PC-3 (cell line): ENCODE measurements at regions of chr10 and their contacts with region 1.

Region 1: GRCh38 chr10:31393844-31394243 is 74.8 kb downstream of the ZEB1 start:
- DNase-seq: no peak
- ATAC-seq: no peak; the same call in 1 of the 2 replicates
- H3K4me3 ChIP-seq: no peak overlapping the region
- H3K27ac ChIP-seq: peak overlapping the region; percentile 32; the same call in 1 of the 2 replicates
- H3K4me1 ChIP-seq: peaks cover 22% of the 10 kb centered on the region
- H3K27me3 ChIP-seq: no peaks in the 10 kb centered on the region
- CTCF ChIP-seq: no peak

Region 2: GRCh38 chr10:31353574-31353973 is 40.3 kb before region 1 on chr10:
- CTCF ChIA-PET with region 1: no interaction called
- POLR2A ChIA-PET with region 1: no interaction called
- intact Hi-C with region 1: loop called (anchors 5 kb)
- DNase-seq: peak; percentile 88
- ATAC-seq: peak; percentile 97
- H3K4me3 ChIP-seq: 0 out of 2 replicates have a peak overlapping the region, but pooled peaks have one; percentile 51
- H3K27ac ChIP-seq: peak overlapping the region; percentile 66
- H3K4me1 ChIP-seq: peaks cover 27% of the 10 kb centered on the region
- H3K27me3 ChIP-seq: no peaks in the 10 kb centered on the region
- CTCF ChIP-seq: peak; percentile 27; the same call in 1 of the 2 replicates